Gastrocnemius medialis (tissue), 4 donors: ENCODE measurements at regions of chr1 and their contacts with region 1.

Region 1: GRCh38 chr1:38873027-38873969 is at the start of gene MYCBP:
- DNase-seq: peak; percentile 94 to 95
- ATAC-seq: peak; percentile 98
- H3K4me3 ChIP-seq: peak within 1 kb of the TSS; percentile 69 to 95 (median 73)
- H3K27ac ChIP-seq: peak within 1 kb of the TSS; percentile 69 to 86 (median 77)
- H3K4me1 ChIP-seq: peaks cover 24 to 25% of the 10 kb centered on the region in 2 donors
- H3K27me3 ChIP-seq: no peaks in the 10 kb centered on the region
- CTCF ChIP-seq: peak in 2 of 5 experiments; percentile 22 to 24
- POLR2A ChIP-seq: peak; percentile 25 to 37
- total RNA-seq, gene MYCBP: 9.8 to 22.3 (median 13.5) TPM

Region 2: GRCh38 chr1:39003794-39004193 is 130.5 kb after region 1 on chr1:
- in situ Hi-C with region 1: loop called in 2 of 4 experiments (anchors 10 to 25 kb)
- intact Hi-C with region 1: no loop called
- DNase-seq: no peak
- ATAC-seq: no peak
- H3K4me3 ChIP-seq: no peak overlapping the region
- H3K27ac ChIP-seq: peak overlapping the region in 1 of 4 donors; percentile 46
- H3K4me1 ChIP-seq: peaks cover 0 to 6% of the 10 kb centered on the region in 2 donors
- H3K27me3 ChIP-seq: no peaks in the 10 kb centered on the region
- CTCF ChIP-seq: no peak
- POLR2A ChIP-seq: no peak

Region 3: GRCh38 chr1:39026051-39026865 is 153.0 kb after region 1 on chr1 and contains the start of gene NDUFS5:
- in situ Hi-C with region 1: loop called in 1 of 4 experiments (anchors 25 kb)
- intact Hi-C with region 1: loop called (anchors 2 kb)
- DNase-seq: peak; percentile 82 to 90
- ATAC-seq: peak; percentile 95 to 96
- H3K4me3 ChIP-seq: peak within 1 kb of the TSS; percentile 68 to 91 (median 80)
- H3K27ac ChIP-seq: peak within 1 kb of the TSS; percentile 91 to 97 (median 94)
- H3K4me1 ChIP-seq: peaks cover 14 to 19% of the 10 kb centered on the region in 2 donors
- H3K27me3 ChIP-seq: no peaks in the 10 kb centered on the region
- CTCF ChIP-seq: peak in 1 of 5 experiments; percentile 15
- POLR2A ChIP-seq: peak; percentile 86 to 95
- total RNA-seq, gene NDUFS5: 603 to 976 (median 911) TPM